CD4-positive, alpha-beta T cell (primary cell): ENCODE measurements at regions of chr15 and their contacts with region 1.

Region 1: DNA sequence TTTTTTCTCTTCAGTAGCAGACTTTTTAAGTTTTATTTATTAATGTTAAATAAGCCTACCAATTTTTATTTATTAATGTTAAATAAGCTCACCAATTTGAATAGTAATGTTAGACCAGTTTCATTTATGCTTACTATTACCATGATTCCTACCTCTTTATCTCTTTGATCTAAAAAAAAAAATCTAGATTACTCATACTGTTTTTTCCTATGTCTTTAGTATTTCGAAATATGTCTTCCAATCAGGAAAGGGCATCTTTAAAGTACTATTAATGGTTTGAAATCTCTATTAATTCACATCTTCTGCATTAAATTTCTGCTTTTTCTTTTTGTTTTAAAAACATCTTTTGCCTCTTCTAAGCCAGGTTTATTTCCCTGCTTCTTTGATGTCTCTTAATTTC is 27.5 kb upstream of the MAPKBP1 start:
- DNase-seq: no peak
- ATAC-seq: no peak
- H3K4me3 ChIP-seq: no peak overlapping the region
- H3K4me3 Mint-ChIP-seq: no peak overlapping the region
- H3K27ac ChIP-seq: no peak overlapping the region
- H3K27ac Mint-ChIP-seq: no peak overlapping the region
- H3K4me1 ChIP-seq: no peaks in the 10 kb centered on the region
- H3K4me1 Mint-ChIP-seq: peaks cover 6% of the 10 kb centered on the region
- H3K27me3 ChIP-seq: no peaks in the 10 kb centered on the region
- H3K27me3 Mint-ChIP-seq: no peaks in the 10 kb centered on the region
- CTCF ChIP-seq: no peak

Region 2: DNA sequence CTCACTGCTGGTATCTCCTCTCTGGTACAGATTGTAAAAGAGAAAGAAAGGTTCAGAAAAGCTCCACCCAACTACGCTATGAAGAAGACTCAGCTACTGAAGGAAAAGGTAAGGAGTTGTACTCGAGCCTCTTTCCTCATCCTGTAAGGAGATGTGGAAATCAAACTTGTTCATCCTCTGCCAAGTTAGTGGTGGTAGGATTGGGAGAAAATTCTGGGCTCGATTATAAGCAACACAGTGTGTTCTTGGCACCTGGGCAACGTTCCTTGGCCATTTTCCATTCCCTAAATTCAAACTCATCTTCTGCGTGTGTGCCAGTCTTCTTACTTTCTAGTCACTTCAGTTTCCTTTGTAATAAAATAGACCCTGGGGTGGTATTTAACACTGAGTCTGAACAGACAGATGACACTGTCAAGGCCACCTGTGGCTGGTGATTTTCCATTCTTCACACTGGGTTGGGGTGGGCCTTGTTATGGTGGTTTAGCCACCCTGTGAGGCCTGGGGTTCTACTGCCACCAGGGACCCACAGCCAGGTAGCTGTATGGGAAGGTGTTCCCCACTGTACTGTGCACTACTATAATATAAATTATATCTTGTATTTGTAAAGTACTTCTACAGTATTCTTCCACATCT is 270.3 kb before region 1 on chr15:
- CTCF ChIA-PET with region 1: no interaction called
- POLR2A ChIA-PET with region 1: no interaction called
- intact Hi-C with region 1: loop called in 1 of 2 experiments (anchors 10 kb)
- DNase-seq: no peak
- ATAC-seq: no peak
- H3K4me3 ChIP-seq: no peak overlapping the region
- H3K4me3 Mint-ChIP-seq: no peak overlapping the region
- H3K27ac ChIP-seq: no peak overlapping the region
- H3K27ac Mint-ChIP-seq: no peak overlapping the region
- H3K4me1 ChIP-seq: no peaks in the 10 kb centered on the region
- H3K4me1 Mint-ChIP-seq: no peaks in the 10 kb centered on the region
- H3K27me3 ChIP-seq: no peaks in the 10 kb centered on the region
- H3K27me3 Mint-ChIP-seq: no peaks in the 10 kb centered on the region
- CTCF ChIP-seq: no peak